Activated CD8-positive, alpha-beta T cell treated with anti-CD3 and anti-CD28 coated beads for 36 hours (primary cell): ENCODE measurements at regions of chr17 and their contacts with region 1.

Region 1: DNA sequence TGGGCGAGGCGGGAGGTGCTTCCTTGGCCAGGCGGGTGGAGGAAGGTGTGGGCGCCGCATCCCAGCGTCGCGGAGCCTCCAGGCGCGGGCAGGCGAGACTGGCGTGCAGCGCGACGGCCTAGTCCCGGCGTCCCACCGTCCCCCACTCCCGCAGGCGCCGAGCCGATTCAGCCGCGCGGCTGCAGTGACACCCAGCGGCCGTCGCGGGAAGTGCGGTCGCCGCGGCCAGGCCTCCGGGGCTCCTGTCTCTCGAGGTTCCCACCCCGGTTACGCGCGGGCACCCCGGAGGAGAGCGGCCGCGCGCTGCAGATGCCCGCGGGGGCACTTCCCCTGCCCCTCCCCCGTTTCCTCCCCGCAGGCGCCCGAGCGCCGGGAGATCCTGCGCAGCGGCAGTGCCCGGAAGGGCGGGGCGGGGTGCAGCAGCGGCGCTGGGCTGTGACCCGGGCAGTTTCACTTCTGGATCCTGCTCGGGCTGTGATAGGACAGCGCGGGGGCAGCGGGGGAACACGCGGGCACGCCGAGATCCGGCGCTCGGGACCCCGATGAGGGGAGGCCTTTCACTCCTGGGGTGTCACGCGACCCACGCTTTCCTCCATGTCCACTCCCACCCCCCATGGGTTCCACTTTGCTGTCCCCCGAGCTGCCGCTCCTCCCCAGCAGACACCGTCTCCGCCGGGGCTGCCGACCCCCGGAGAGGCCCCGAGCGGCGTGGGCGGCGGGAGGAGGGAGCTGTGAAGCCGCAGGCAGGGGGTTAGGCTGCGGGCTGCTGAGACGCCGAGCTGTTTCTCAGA is 16.6 kb downstream of the GRB7 start:
- DNase-seq: peak; percentile 97
- ATAC-seq: peak; percentile 81
- H3K4me3 Mint-ChIP-seq: peak overlapping the region; percentile 76
- H3K27ac Mint-ChIP-seq: peak overlapping the region; percentile 90
- H3K4me1 Mint-ChIP-seq: peaks cover 65% of the 10 kb centered on the region
- H3K27me3 Mint-ChIP-seq: no peaks in the 10 kb centered on the region
- CTCF ChIP-seq: peak; percentile 96

Region 2: GRCh38 chr17:39636927-39637736 is 117.2 kb before region 1 on chr17 and contains the start of gene STARD3:
- CTCF ChIA-PET with region 1: interaction called, 14 read pairs
- POLR2A ChIA-PET with region 1: interaction called, 3 read pairs
- intact Hi-C with region 1: no loop called
- DNase-seq: peak; percentile 95
- ATAC-seq: peak; percentile 93
- H3K4me3 Mint-ChIP-seq: peak within 1 kb of the TSS; percentile 90
- H3K27ac Mint-ChIP-seq: peak within 1 kb of the TSS; percentile 87
- H3K4me1 Mint-ChIP-seq: peaks cover 46% of the 10 kb centered on the region
- H3K27me3 Mint-ChIP-seq: no peaks in the 10 kb centered on the region
- CTCF ChIP-seq: no peak
- total RNA-seq, gene STARD3: 48.7 to 50.3 TPM

Region 3: GRCh38 chr17:39769974-39770587 is 15.7 kb after region 1 on chr17:
- CTCF ChIA-PET with region 1: interaction called, 22 read pairs
- POLR2A ChIA-PET with region 1: interaction called, 43 read pairs
- intact Hi-C with region 1: no loop called
- DNase-seq: peak; percentile 84
- ATAC-seq: peak; percentile 81
- H3K4me3 Mint-ChIP-seq: peak overlapping the region; percentile 18
- H3K27ac Mint-ChIP-seq: peak overlapping the region; percentile 90
- H3K4me1 Mint-ChIP-seq: peaks cover 95% of the 10 kb centered on the region
- H3K27me3 Mint-ChIP-seq: no peaks in the 10 kb centered on the region
- CTCF ChIP-seq: no peak

Region 4: GRCh38 chr17:39794249-39794970 is 40.1 kb after region 1 on chr17:
- CTCF ChIA-PET with region 1: interaction called, 8 read pairs
- POLR2A ChIA-PET with region 1: interaction called, 19 read pairs
- intact Hi-C with region 1: loop called (anchors 5 kb)
- DNase-seq: peak; percentile 62
- ATAC-seq: peak; percentile 58
- H3K4me3 Mint-ChIP-seq: peak overlapping the region; percentile 9
- H3K27ac Mint-ChIP-seq: peak overlapping the region; percentile 84
- H3K4me1 Mint-ChIP-seq: peaks cover 75% of the 10 kb centered on the region
- H3K27me3 Mint-ChIP-seq: no peaks in the 10 kb centered on the region
- CTCF ChIP-seq: no peak

Region 5: GRCh38 chr17:39927101-39927928 is 173.0 kb after region 1 on chr17 and contains the starts of genes LRRC3C and ORMDL3:
- CTCF ChIA-PET with region 1: interaction called, 6 read pairs
- POLR2A ChIA-PET with region 1: interaction called, 13 read pairs
- intact Hi-C with region 1: loop called (anchors 5 kb)
- DNase-seq: peak; percentile 93
- ATAC-seq: peak; percentile 74
- H3K4me3 Mint-ChIP-seq: peak within 1 kb of the TSS; percentile 94
- H3K27ac Mint-ChIP-seq: peak within 1 kb of the TSS; percentile 87
- H3K4me1 Mint-ChIP-seq: peaks cover 52% of the 10 kb centered on the region
- H3K27me3 Mint-ChIP-seq: no peaks in the 10 kb centered on the region
- CTCF ChIP-seq: no peak
- total RNA-seq, gene LRRC3C: not detected
- total RNA-seq, gene ORMDL3: 78.8 to 80.5 TPM